ENCODE measurements at regions of chr15 and their contacts with region 1.

Region 1: DNA sequence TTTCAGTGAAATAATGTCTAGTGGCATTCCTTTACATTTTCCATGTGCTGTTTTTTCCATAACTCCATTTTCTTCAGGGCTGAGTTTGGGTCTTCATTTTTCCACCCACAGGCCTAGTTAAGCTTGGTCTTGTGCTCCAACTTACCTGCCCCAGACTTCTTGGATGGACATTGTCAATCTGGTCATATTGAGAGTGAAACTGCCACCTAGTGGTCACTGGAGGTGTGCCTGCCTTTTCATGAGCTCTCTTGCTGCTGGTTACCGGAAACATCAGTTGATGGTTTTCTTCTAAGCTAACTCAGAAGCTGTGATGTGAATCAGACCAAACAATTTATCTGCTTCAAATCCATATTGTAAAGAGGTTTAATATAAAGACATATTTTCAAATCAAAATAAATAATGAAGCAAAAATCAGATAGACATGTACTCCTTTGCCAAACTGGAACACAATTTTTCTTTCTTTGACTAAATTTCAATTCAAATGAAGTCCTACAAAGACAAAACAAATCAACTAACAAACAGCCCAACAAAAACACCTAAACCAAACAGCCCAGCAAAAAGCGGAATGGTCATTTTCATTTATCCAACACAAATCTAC is 135.1 kb upstream of the RASGRP1 start:
- DNase-seq: peak; percentile 53 to 88 (median 62)
- ATAC-seq: peak; percentile 59
- H3K4me3 ChIP-seq: no peak overlapping the region
- H3K4me3 Mint-ChIP-seq: peak overlapping the region; percentile 2
- H3K27ac ChIP-seq: peak overlapping the region in 1 of 2 donors; percentile 7
- H3K27ac Mint-ChIP-seq: peak overlapping the region; percentile 55
- H3K4me1 ChIP-seq: peaks cover 50% of the 10 kb centered on the region
- H3K4me1 Mint-ChIP-seq: peaks cover 50% of the 10 kb centered on the region
- H3K27me3 ChIP-seq: no peaks in the 10 kb centered on the region
- H3K27me3 Mint-ChIP-seq: no peaks in the 10 kb centered on the region
- CTCF ChIP-seq: peak; percentile 96

Region 2: DNA sequence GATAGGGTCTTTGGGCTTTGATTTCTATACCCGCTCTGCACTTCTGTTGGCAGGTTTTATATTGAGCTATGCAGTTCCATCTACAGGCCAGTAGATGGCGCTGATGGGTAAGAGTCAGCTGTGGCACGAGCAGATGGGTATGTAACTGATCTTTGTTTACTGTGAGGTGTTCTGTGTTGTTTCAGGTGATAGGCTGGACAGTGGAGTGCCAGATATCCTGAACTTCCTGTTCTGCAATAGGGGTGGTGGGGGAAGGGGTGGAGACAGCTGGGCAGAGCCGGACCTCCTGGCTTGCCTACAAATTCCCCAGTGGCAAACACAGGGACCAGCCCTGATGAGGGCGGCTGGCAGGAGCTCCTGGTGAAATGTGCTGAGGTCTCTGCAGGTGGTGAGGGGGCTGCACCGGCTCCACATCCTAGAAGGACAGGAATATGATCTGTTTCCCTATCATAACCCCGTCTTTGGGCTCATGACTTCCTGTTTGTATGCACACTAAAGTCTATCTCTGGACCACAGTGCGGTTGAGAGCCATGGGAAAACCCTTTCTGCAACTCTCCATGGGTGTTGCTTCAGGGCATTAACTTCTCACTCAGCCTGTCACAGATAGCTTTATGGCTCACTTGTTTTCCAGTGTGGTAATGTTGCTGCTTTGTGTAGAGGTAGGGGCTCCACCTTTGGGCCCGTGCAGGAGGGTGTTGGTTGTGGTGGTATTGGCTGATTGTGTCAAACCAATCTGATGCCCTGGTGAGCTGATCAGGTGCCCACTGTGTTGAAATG is 259.2 kb before region 1 on chr15:
- CTCF ChIA-PET with region 1: interaction called, 14 read pairs
- POLR2A ChIA-PET with region 1: interaction called, 18 read pairs
- intact Hi-C with region 1: loop called in 1 of 2 experiments (anchors 2 kb)
- DNase-seq: peak; percentile 10 to 88 (median 35)
- ATAC-seq: peak; percentile 96
- H3K4me3 ChIP-seq: no peak overlapping the region
- H3K4me3 Mint-ChIP-seq: no peak overlapping the region
- H3K27ac ChIP-seq: no peak overlapping the region
- H3K27ac Mint-ChIP-seq: no peak overlapping the region
- H3K4me1 ChIP-seq: peaks cover 7% of the 10 kb centered on the region
- H3K4me1 Mint-ChIP-seq: peaks cover 5% of the 10 kb centered on the region
- H3K27me3 ChIP-seq: peaks cover 0 to 7% of the 10 kb centered on the region in 2 experiments
- H3K27me3 Mint-ChIP-seq: peaks cover 37% of the 10 kb centered on the region
- CTCF ChIP-seq: peak; percentile 99

Region 3: GRCh38 chr15:38474155-38474757 is 225.5 kb before region 1 on chr15:
- CTCF ChIA-PET with region 1: interaction called, 38 read pairs
- POLR2A ChIA-PET with region 1: interaction called, 18 read pairs
- intact Hi-C with region 1: loop called (anchors 1 kb)
- DNase-seq: peak in 10 of 14 experiments; percentile 6 to 85 (median 30)
- ATAC-seq: peak; percentile 100
- H3K4me3 ChIP-seq: no peak overlapping the region
- H3K4me3 Mint-ChIP-seq: no peak overlapping the region
- H3K27ac ChIP-seq: no peak overlapping the region
- H3K27ac Mint-ChIP-seq: peak overlapping the region; percentile 61
- H3K4me1 ChIP-seq: no peaks in the 10 kb centered on the region
- H3K4me1 Mint-ChIP-seq: peaks cover 5% of the 10 kb centered on the region
- H3K27me3 ChIP-seq: no peaks in the 10 kb centered on the region
- H3K27me3 Mint-ChIP-seq: no peaks in the 10 kb centered on the region
- CTCF ChIP-seq: peak; percentile 82

Region 4: GRCh38 chr15:38486936-38487335 is 212.8 kb before region 1 on chr15:
- CTCF ChIA-PET with region 1: interaction called, 12 read pairs
- POLR2A ChIA-PET with region 1: interaction called, 5 read pairs
- intact Hi-C with region 1: no loop called
- DNase-seq: peak in 3 of 14 experiments; percentile 45 to 61 (median 53)
- ATAC-seq: peak; percentile 86
- H3K4me3 ChIP-seq: no peak overlapping the region
- H3K4me3 Mint-ChIP-seq: peak overlapping the region; percentile 15
- H3K27ac ChIP-seq: peak overlapping the region; percentile 50
- H3K27ac Mint-ChIP-seq: peak overlapping the region; percentile 86
- H3K4me1 ChIP-seq: no peaks in the 10 kb centered on the region
- H3K4me1 Mint-ChIP-seq: peaks cover 52% of the 10 kb centered on the region
- H3K27me3 ChIP-seq: no peaks in the 10 kb centered on the region
- H3K27me3 Mint-ChIP-seq: no peaks in the 10 kb centered on the region
- CTCF ChIP-seq: no peak

Region 5: GRCh38 chr15:38536201-38536676 is 163.5 kb before region 1 on chr15:
- CTCF ChIA-PET with region 1: interaction called, 10 read pairs
- POLR2A ChIA-PET with region 1: interaction called, 3 read pairs
- intact Hi-C with region 1: no loop called
- DNase-seq: no peak
- ATAC-seq: no peak
- H3K4me3 ChIP-seq: no peak overlapping the region
- H3K4me3 Mint-ChIP-seq: peak overlapping the region; percentile 62
- H3K27ac ChIP-seq: no peak overlapping the region
- H3K27ac Mint-ChIP-seq: peak overlapping the region; percentile 80
- H3K4me1 ChIP-seq: peaks cover 86% of the 10 kb centered on the region
- H3K4me1 Mint-ChIP-seq: peaks cover 100% of the 10 kb centered on the region
- H3K27me3 ChIP-seq: no peaks in the 10 kb centered on the region
- H3K27me3 Mint-ChIP-seq: no peaks in the 10 kb centered on the region
- CTCF ChIP-seq: no peak

Region 6: GRCh38 chr15:38683382-38684242 is 16.1 kb before region 1 on chr15:
- CTCF ChIA-PET with region 1: interaction called, 75 read pairs
- POLR2A ChIA-PET with region 1: interaction called, 18 read pairs
- intact Hi-C with region 1: loop called in 1 of 2 experiments (anchors 2 kb)
- DNase-seq: peak; percentile 45 to 88 (median 70)
- ATAC-seq: peak; percentile 63
- H3K4me3 ChIP-seq: no peak overlapping the region
- H3K4me3 Mint-ChIP-seq: peak overlapping the region; percentile 2
- H3K27ac ChIP-seq: peak overlapping the region in 1 of 2 donors; percentile 39
- H3K27ac Mint-ChIP-seq: peak overlapping the region; percentile 89
- H3K4me1 ChIP-seq: peaks cover 60% of the 10 kb centered on the region
- H3K4me1 Mint-ChIP-seq: peaks cover 84% of the 10 kb centered on the region
- H3K27me3 ChIP-seq: no peaks in the 10 kb centered on the region
- H3K27me3 Mint-ChIP-seq: no peaks in the 10 kb centered on the region
- CTCF ChIP-seq: peak; percentile 96

Region 7: DNA sequence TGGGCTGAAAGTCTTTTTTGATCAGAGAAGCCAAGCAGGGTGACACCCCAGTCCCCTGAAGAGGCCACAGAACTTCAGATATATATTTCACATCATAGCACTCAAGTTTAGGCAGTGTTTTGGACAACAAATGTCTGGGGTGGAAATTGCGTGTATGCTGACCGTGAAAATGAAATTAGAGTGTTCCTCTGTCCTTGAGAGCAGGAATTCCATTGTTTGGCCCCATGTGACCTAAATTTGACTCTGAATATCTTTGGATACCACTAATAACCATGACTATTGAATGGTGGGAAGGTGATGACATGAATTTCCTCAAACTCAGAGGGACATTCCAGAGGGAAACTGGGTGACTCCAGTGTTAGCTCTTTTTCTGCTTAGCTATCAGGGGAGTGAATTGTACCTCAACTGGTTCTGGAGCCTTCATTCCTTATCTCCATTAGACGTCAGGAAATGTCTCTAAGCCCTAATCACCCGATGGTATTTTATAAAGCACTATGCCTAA is 128.3 kb after region 1 on chr15:
- CTCF ChIA-PET with region 1: no interaction called
- POLR2A ChIA-PET with region 1: no interaction called
- intact Hi-C with region 1: no loop called
- DNase-seq: no peak
- ATAC-seq: no peak
- H3K4me3 ChIP-seq: no peak overlapping the region
- H3K4me3 Mint-ChIP-seq: no peak overlapping the region
- H3K27ac ChIP-seq: no peak overlapping the region
- H3K27ac Mint-ChIP-seq: no peak overlapping the region
- H3K4me1 ChIP-seq: no peaks in the 10 kb centered on the region
- H3K4me1 Mint-ChIP-seq: no peaks in the 10 kb centered on the region
- H3K27me3 ChIP-seq: peaks cover 0 to 11% of the 10 kb centered on the region in 2 experiments
- H3K27me3 Mint-ChIP-seq: peaks cover 50% of the 10 kb centered on the region
- CTCF ChIP-seq: no peak

Region 8: DNA sequence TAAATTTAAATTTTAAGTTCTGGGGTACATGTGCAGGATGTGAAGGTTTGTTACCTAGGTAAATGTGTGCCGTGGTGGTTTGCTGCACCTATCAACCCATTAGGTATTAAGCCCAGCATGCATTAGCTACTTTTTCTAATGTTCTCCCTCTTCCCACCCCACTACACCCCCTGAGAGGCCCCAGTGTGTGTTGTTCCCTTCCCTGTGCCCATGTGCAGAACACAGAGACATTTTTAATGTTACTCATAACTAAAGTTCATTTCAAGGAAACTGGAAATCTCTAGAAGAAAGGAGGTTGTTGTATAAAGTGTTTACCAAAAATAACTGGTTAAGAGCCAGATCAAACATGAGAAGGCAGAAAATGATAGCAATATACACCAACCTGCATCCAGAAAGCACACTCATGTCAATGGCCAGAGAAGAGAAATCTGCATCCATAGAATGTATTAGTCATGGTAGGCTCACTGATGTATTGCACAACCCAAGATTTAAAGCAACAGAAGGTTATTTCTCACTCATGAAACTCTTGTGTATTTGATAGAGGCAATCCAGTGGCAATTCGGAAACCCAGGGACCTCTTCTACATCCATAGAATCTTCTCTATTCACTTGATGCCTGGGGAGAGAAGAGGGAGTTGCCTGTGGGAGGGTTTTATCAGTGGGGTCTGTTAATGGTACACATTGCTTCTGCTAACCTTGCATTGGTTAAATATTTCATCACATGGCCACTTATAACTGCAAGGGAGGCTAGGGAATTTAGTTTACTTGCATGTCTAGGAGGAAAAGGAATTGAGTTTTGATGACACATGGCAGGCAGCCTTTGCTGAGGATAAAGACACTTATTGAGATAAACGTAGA is 186.8 kb after region 1 on chr15:
- CTCF ChIA-PET with region 1: no interaction called
- POLR2A ChIA-PET with region 1: no interaction called
- intact Hi-C with region 1: no loop called
- DNase-seq: no peak
- ATAC-seq: no peak
- H3K4me3 ChIP-seq: no peak overlapping the region
- H3K4me3 Mint-ChIP-seq: no peak overlapping the region
- H3K27ac ChIP-seq: no peak overlapping the region
- H3K27ac Mint-ChIP-seq: no peak overlapping the region
- H3K4me1 ChIP-seq: no peaks in the 10 kb centered on the region
- H3K4me1 Mint-ChIP-seq: peaks cover 8% of the 10 kb centered on the region
- H3K27me3 ChIP-seq: no peaks in the 10 kb centered on the region
- H3K27me3 Mint-ChIP-seq: peaks cover 8% of the 10 kb centered on the region
- CTCF ChIP-seq: no peak

Measured in CD4-positive, alpha-beta T cell (primary cell).